GM12878 (cell line): ENCODE measurements at regions of chr10 and their contacts with region 1.

Region 1: GRCh38 chr10:62779487-62780248 is 24.9 kb upstream of the ADO start:
- DNase-seq: peak; percentile 84
- ATAC-seq: peak; percentile 96
- H3K4me3 ChIP-seq: no peak overlapping the region
- H3K27ac ChIP-seq: peak overlapping the region; percentile 75; the same call in 1 of the 2 replicates
- H3K4me1 ChIP-seq: peaks cover 23% of the 10 kb centered on the region
- H3K27me3 ChIP-seq: no peaks in the 10 kb centered on the region
- CTCF ChIP-seq: no peak
- EP300 ChIP-seq: peak; percentile 83 to 84
- POLR2A ChIP-seq: no peak
- RAD21 ChIP-seq: no peak

Region 2: GRCh38 chr10:62632071-62632809 is 147.4 kb before region 1 on chr10:
- CTCF ChIA-PET with region 1: interaction called, 6 read pairs
- POLR2A ChIA-PET with region 1: interaction called, 4 read pairs
- RAD21 ChIA-PET with region 1: interaction called, 23 read pairs
- SMC1A ChIA-PET with region 1: interaction called, 24 read pairs
- in situ Hi-C with region 1: no loop called
- intact Hi-C with region 1: no loop called
- DNase-seq: peak; percentile 80
- ATAC-seq: peak; percentile 85
- H3K4me3 ChIP-seq: 0 out of 2 replicates have a peak overlapping the region, but pooled peaks have one; percentile 1
- H3K27ac ChIP-seq: peak overlapping the region; percentile 71
- H3K4me1 ChIP-seq: peaks cover 56% of the 10 kb centered on the region
- H3K27me3 ChIP-seq: no peaks in the 10 kb centered on the region
- CTCF ChIP-seq: no peak
- EP300 ChIP-seq: peak; percentile 75 to 94
- POLR2A ChIP-seq: no peak
- RAD21 ChIP-seq: peak; percentile 29; the same call in 1 of the 2 replicates

Region 3: DNA sequence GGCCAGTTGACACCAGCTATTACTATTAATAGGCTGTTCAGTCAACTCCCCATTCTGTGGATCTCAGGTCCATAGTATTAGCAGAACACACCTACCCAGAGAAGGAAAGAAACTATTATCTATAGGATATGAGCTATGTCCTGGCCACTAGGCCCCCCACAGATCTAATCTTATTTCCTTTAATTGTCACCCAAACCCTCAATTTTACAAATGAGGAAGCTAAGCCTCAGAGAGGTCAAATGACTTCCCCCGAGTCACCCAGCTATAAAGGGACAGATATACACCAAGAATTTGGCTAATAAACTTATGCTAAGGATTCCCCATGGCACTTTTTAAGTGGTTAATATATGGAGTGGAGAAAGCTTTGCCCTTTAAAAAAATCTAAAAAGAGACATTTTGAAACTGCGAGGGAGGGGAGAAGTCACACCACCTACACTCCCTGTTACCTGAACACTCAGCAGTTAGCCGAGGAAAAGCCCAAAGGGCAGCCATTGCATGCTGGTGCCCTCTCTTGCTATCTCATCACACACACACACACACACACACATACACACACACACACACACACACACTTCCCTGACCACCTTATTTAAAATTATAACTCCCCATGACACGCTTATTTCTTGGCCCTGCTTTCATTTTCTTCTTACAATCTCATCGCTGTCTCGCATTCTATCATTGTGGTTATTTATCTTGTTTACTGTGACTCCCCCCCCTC is 132.1 kb before region 1 on chr10:
- CTCF ChIA-PET with region 1: no interaction called
- POLR2A ChIA-PET with region 1: no interaction called
- RAD21 ChIA-PET with region 1: interaction called, 9 read pairs
- SMC1A ChIA-PET with region 1: interaction called, 10 read pairs
- in situ Hi-C with region 1: no loop called
- intact Hi-C with region 1: no loop called
- DNase-seq: no peak
- ATAC-seq: peak; percentile 59
- H3K4me3 ChIP-seq: no peak overlapping the region
- H3K27ac ChIP-seq: no peak overlapping the region
- H3K4me1 ChIP-seq: peaks cover 29% of the 10 kb centered on the region
- H3K27me3 ChIP-seq: no peaks in the 10 kb centered on the region
- CTCF ChIP-seq: no peak
- EP300 ChIP-seq: peak; percentile 29 to 40; a peak in 1 of 4 replicates
- POLR2A ChIP-seq: no peak
- RAD21 ChIP-seq: no peak

Region 4: GRCh38 chr10:62707810-62708209 is 71.9 kb before region 1 on chr10:
- CTCF ChIA-PET with region 1: interaction called, 7 read pairs
- POLR2A ChIA-PET with region 1: no interaction called
- RAD21 ChIA-PET with region 1: interaction called, 12 read pairs
- SMC1A ChIA-PET with region 1: interaction called, 20 read pairs
- in situ Hi-C with region 1: no loop called
- intact Hi-C with region 1: no loop called
- DNase-seq: peak; percentile 40
- ATAC-seq: peak; percentile 76
- H3K4me3 ChIP-seq: peak overlapping the region; percentile 9; the same call in 1 of the 2 replicates
- H3K27ac ChIP-seq: peak overlapping the region; percentile 61; the same call in 1 of the 2 replicates
- H3K4me1 ChIP-seq: peaks cover 30% of the 10 kb centered on the region
- H3K27me3 ChIP-seq: no peaks in the 10 kb centered on the region
- CTCF ChIP-seq: no peak
- EP300 ChIP-seq: peak; percentile 9 to 76; a peak in 2 of 4 replicates
- POLR2A ChIP-seq: no peak
- RAD21 ChIP-seq: 0 out of 2 replicates have a peak, but pooled peaks have one; percentile 20

Region 5: GRCh38 chr10:62748386-62748785 is 31.3 kb before region 1 on chr10:
- CTCF ChIA-PET with region 1: interaction called, 8 read pairs
- POLR2A ChIA-PET with region 1: no interaction called
- RAD21 ChIA-PET with region 1: interaction called, 14 read pairs
- SMC1A ChIA-PET with region 1: interaction called, 8 read pairs
- in situ Hi-C with region 1: no loop called
- intact Hi-C with region 1: no loop called
- DNase-seq: no peak
- ATAC-seq: peak; percentile 45
- H3K4me3 ChIP-seq: no peak overlapping the region
- H3K27ac ChIP-seq: no peak overlapping the region
- H3K4me1 ChIP-seq: peaks cover 13% of the 10 kb centered on the region; the same call in 1 of the 2 replicates
- H3K27me3 ChIP-seq: no peaks in the 10 kb centered on the region
- CTCF ChIP-seq: no peak
- EP300 ChIP-seq: no peak
- POLR2A ChIP-seq: no peak
- RAD21 ChIP-seq: peak; percentile 37; the same call in 1 of the 2 replicates

Region 6: GRCh38 chr10:62804356-62805230 is 24.9 kb after region 1 on chr10 and contains the start of gene ADO:
- CTCF ChIA-PET with region 1: interaction called, 5 read pairs
- POLR2A ChIA-PET with region 1: interaction called, 14 read pairs
- RAD21 ChIA-PET with region 1: interaction called, 23 read pairs
- SMC1A ChIA-PET with region 1: interaction called, 54 read pairs
- in situ Hi-C with region 1: no loop called
- intact Hi-C with region 1: no loop called
- DNase-seq: peak; percentile 59
- ATAC-seq: peak; percentile 83
- H3K4me3 ChIP-seq: peak within 1 kb of the TSS; percentile 88
- H3K27ac ChIP-seq: peak within 1 kb of the TSS; percentile 98
- H3K4me1 ChIP-seq: peaks cover 4% of the 10 kb centered on the region; the same call in 1 of the 2 replicates
- H3K27me3 ChIP-seq: no peaks in the 10 kb centered on the region
- CTCF ChIP-seq: no peak
- EP300 ChIP-seq: peak in 1 of 2 experiments; percentile 26; a peak in 1 of 4 replicates
- POLR2A ChIP-seq: peak; percentile 89
- RAD21 ChIP-seq: 0 out of 2 replicates have a peak, but pooled peaks have one; percentile 6
- polyA plus RNA-seq, gene ADO: 4.3 to 8.5 TPM

Region 7: DNA sequence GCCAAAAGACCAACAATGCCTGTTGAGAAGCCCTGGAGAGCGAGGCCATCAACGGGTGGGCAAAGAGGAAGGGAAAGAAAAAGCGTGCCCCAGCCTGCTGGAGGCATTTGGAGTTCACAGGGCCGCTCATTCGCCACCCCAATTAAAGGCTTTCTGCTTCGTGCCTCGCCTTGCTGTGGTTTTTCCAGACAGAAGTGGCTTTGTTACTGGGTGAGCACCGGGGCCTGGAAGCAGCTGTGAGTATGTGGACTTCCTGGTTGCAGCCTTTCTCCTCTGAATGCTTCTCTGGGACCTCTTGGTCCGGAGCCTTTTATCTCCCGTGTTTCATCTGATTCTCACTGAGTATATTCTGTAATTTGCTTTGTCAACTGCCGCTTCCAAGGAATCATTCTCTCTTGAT is 154.6 kb after region 1 on chr10:
- CTCF ChIA-PET with region 1: no interaction called
- POLR2A ChIA-PET with region 1: no interaction called
- RAD21 ChIA-PET with region 1: no interaction called
- SMC1A ChIA-PET with region 1: no interaction called
- in situ Hi-C with region 1: no loop called
- intact Hi-C with region 1: no loop called
- DNase-seq: no peak
- ATAC-seq: no peak
- H3K4me3 ChIP-seq: no peak overlapping the region
- H3K27ac ChIP-seq: no peak overlapping the region
- H3K4me1 ChIP-seq: no peaks in the 10 kb centered on the region
- H3K27me3 ChIP-seq: no peaks in the 10 kb centered on the region
- CTCF ChIP-seq: no peak
- EP300 ChIP-seq: no peak
- POLR2A ChIP-seq: no peak
- RAD21 ChIP-seq: no peak